ENCODE measurements at regions of chr5 and their contacts with region 1.

Region 1: GRCh38 chr5:142548739-142549275 is 137.1 kb downstream of the FGF1 start:
- DNase-seq: no peak
- ATAC-seq: peak; percentile 91

Region 2: GRCh38 chr5:142324871-142325724 is 223.7 kb before region 1 on chr5 and contains the start of gene SPRY4:
- intact Hi-C with region 1: loop called (anchors 10 kb)
- DNase-seq: peak; percentile 95
- ATAC-seq: peak; percentile 80
- total RNA-seq, gene SPRY4: 8.3 TPM

Region 3: DNA sequence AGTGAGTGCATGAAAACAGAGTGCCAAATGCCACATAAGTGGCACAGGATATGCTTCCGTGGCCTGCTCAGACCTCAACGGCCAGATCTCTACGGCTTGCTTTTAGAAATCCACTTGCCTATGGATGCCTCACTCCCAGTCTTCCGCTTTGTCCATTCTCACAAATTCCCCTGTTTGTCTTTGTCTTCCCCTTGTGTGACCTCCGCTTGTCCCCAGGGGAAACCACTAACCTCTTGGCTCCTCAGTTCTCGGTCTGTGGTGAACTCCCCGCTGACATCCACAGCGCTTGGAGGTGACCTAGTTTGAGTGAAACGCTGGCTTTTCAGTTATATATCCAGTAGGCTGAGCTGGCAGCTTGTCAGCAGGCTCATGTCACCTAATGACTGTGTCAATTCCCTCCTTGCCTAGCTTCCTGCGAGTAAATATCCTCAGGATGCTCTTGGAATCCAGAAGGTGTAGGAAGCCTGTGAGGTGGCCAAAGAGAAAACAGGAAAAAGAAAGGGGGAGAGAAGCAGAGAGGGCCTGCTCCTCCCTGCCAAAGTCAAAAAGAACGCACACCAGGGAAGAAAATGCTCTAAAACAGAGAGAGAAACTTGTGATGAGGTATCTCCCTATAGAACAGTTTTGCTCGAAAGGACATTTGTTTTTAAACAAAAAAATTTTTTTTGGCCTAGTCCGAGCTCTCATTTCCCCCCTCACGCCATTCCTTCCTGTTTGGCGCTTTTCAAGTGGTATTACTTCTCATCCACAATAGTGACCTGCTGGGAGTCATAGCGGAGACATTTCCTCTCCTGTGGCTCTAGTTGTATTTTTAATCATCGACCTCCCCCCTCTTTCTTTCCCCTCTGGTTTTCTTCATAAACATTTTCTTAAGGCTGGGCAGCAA is 122.4 kb before region 1 on chr5:
- intact Hi-C with region 1: loop called (anchors 10 kb)
- DNase-seq: peak; percentile 75
- ATAC-seq: peak; percentile 78